IMR-90 (cell line): ENCODE measurements at regions of chr12 and their contacts with region 1.

Region 1: DNA sequence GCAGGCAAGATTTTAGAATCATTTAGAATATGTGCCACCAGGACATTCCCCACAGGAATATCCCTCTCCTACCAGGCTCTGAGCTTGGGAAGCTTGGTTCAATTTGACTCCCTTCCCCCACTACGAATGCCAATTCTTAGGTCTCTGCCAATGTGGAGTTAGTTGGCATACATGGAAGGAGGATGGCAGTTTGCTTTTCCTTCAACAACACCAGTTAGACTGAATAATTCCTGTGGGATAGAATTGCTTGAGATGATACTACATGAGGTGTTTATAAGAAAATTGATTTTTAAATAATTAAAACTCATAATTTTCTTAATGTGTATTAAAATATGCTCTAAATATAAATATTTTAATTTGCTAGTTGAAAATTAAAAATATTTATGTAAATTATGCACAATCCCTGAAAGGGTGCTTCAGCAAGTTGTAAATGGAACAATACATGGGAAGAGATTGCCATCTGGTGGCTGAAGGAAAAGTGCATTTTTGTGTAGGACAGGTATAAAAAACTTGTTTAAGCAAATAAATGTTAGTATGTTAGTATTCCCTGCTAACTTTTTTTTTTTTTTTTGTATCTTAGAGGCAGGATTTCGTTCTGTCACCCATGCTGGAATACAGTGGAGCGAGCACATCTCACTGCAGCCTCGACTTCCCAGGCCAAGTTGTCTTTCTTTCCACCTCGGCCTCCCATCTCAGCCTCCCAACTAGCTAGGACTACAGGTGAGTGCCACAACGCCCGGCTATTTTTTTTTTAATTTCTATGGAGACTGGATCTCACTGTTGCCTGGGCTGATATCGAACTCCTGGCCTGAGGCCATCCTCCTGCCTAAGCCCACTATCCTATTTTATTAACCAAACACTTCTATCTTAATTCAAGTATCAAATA is 25.8 kb upstream of the STRAP start:
- DNase-seq: peak; percentile 76
- ATAC-seq: peak; percentile 66
- H3K4me3 ChIP-seq: no peak overlapping the region
- H3K27ac ChIP-seq: peak overlapping the region; percentile 63
- H3K4me1 ChIP-seq: peaks cover 11% of the 10 kb centered on the region
- H3K27me3 ChIP-seq: no peaks in the 10 kb centered on the region
- CTCF ChIP-seq: peak; percentile 93
- POLR2A ChIP-seq: peak; percentile 63; the same call in 1 of the 2 replicates
- RAD21 ChIP-seq: peak; percentile 99

Region 2: GRCh38 chr12:15276088-15276698 is 580.1 kb before region 1 on chr12:
- CTCF ChIA-PET with region 1: no interaction called
- POLR2A ChIA-PET with region 1: no interaction called
- dilution Hi-C with region 1: no loop called
- in situ Hi-C with region 1: loop called (anchors 5 kb)
- intact Hi-C with region 1: loop called (anchors 1 kb)
- DNase-seq: peak; percentile 29
- ATAC-seq: peak; percentile 76
- H3K4me3 ChIP-seq: no peak overlapping the region
- H3K27ac ChIP-seq: no peak overlapping the region
- H3K4me1 ChIP-seq: no peaks in the 10 kb centered on the region
- H3K27me3 ChIP-seq: no peaks in the 10 kb centered on the region
- CTCF ChIP-seq: peak; percentile 79
- POLR2A ChIP-seq: no peak
- RAD21 ChIP-seq: peak; percentile 68

Region 3: GRCh38 chr12:15590180-15590826 is 266.0 kb before region 1 on chr12:
- CTCF ChIA-PET with region 1: interaction called, 12 read pairs
- POLR2A ChIA-PET with region 1: no interaction called
- dilution Hi-C with region 1: no loop called
- in situ Hi-C with region 1: loop called (anchors 5 kb)
- intact Hi-C with region 1: loop called (anchors 1 kb)
- DNase-seq: peak; percentile 70
- ATAC-seq: peak; percentile 97
- H3K4me3 ChIP-seq: peak overlapping the region; percentile 37
- H3K27ac ChIP-seq: no peak overlapping the region
- H3K4me1 ChIP-seq: no peaks in the 10 kb centered on the region
- H3K27me3 ChIP-seq: peaks cover 2% of the 10 kb centered on the region; the same call in 1 of the 2 replicates
- CTCF ChIP-seq: peak; percentile 92
- POLR2A ChIP-seq: no peak
- RAD21 ChIP-seq: peak; percentile 97

Region 4: DNA sequence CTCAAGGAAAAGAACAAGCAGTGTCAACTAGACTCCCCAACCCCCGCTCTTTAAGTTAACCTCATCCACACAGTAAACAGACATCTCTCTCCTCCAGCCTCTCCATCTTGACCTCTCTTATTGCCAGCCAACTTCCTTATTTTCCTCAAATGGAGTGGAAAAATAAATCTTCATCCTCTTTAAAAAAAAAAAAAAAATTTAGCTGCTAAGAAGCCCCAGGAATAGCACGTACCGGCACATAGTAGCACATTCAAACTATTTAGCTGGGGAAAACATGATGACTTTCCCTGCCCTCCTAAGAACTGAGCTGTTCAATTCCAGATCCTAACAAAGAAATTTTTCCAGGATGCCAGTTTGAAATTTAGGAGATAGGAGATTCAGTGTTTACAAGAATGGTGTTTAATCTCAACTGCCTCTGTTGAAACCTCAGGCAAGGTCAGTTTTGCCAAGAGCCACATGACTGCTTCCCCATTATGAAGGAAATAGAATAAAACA is 157.9 kb before region 1 on chr12:
- CTCF ChIA-PET with region 1: no interaction called
- POLR2A ChIA-PET with region 1: no interaction called
- dilution Hi-C with region 1: no loop called
- in situ Hi-C with region 1: no loop called
- intact Hi-C with region 1: loop called (anchors 10 kb)
- DNase-seq: no peak
- ATAC-seq: no peak
- H3K4me3 ChIP-seq: no peak overlapping the region
- H3K27ac ChIP-seq: no peak overlapping the region
- H3K4me1 ChIP-seq: peaks cover 12% of the 10 kb centered on the region
- H3K27me3 ChIP-seq: no peaks in the 10 kb centered on the region
- CTCF ChIP-seq: no peak
- POLR2A ChIP-seq: no peak
- RAD21 ChIP-seq: no peak

Region 5: DNA sequence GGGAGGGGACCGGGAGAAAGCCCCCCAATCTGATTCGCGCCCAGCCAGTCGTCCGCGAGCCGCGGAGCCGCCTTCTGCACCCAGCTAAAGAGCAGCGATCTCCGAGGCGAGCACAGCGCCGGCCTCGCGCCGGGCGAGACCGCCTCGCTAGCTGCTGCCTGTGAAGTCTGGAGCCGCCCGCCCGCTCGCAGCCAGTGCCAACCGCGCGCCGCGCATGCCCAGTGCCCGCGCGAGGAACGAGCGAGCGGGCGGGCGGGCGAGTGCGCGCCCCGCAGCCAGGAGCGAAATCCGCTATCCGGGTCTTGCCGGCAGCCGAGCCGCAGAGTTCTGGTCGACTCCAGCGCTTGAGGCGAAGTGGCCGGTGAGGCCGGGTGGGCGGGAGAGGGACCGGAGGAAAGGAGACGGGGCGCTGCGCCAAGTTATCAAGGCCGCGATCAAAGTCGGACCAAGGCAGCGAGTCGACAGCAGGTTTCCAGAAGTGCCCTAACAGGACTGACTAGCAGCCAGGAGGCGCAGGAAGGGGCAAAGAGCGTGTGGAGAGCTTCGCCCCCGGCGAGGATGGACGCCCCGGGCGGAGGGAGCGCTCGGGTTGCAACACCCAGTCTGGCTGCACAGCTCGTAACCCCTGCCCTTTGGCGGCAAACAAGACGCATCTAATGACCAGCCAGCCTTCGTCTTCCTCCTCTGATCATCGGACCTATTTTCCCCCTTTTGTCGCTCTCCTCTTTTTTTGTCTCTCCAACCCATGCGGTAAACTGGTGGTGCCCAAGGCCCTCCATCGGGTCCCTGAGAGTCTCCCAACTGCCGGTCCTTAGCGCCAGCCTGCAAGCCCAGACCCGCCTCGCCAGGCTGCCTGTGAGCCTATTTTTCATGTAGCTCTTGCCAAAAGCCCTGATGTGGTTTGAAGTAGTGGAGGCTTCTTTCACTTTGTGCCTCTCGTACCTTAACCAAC is 66.8 kb before region 1 on chr12 and contains the start of gene EPS8:
- CTCF ChIA-PET with region 1: no interaction called
- POLR2A ChIA-PET with region 1: no interaction called
- dilution Hi-C with region 1: no loop called
- in situ Hi-C with region 1: no loop called
- intact Hi-C with region 1: loop called (anchors 1 kb)
- DNase-seq: peak; percentile 91
- ATAC-seq: peak; percentile 91
- H3K4me3 ChIP-seq: peak within 1 kb of the TSS; percentile 72
- H3K27ac ChIP-seq: peak within 1 kb of the TSS; percentile 96
- H3K4me1 ChIP-seq: peaks cover 2% of the 10 kb centered on the region; the same call in 1 of the 2 replicates
- H3K27me3 ChIP-seq: no peaks in the 10 kb centered on the region
- CTCF ChIP-seq: no peak
- POLR2A ChIP-seq: peak; percentile 86
- RAD21 ChIP-seq: peak; percentile 28; the same call in 1 of the 2 replicates
- total RNA-seq, gene EPS8: 102 and 104 TPM in 2 replicates